BJ (cell line): ENCODE measurements at regions of chr13 and their contacts with region 1.

Region 1: GRCh38 chr13:114109641-114110041 is 22.8 kb downstream of the RASA3 start:
- DNase-seq: no peak
- H3K4me3 ChIP-seq: no peak overlapping the region
- H3K27me3 ChIP-seq: no peaks in the 10 kb centered on the region
- CTCF ChIP-seq: no peak

Region 2: GRCh38 chr13:114025714-114026431 is 83.8 kb before region 1 on chr13:
- CTCF ChIA-PET with region 1: no interaction called
- POLR2A ChIA-PET with region 1: no interaction called
- DNase-seq: no peak
- H3K4me3 ChIP-seq: no peak overlapping the region
- H3K27me3 ChIP-seq: no peaks in the 10 kb centered on the region
- CTCF ChIP-seq: peak; percentile 28; the same call in 1 of the 2 replicates

Region 3: DNA sequence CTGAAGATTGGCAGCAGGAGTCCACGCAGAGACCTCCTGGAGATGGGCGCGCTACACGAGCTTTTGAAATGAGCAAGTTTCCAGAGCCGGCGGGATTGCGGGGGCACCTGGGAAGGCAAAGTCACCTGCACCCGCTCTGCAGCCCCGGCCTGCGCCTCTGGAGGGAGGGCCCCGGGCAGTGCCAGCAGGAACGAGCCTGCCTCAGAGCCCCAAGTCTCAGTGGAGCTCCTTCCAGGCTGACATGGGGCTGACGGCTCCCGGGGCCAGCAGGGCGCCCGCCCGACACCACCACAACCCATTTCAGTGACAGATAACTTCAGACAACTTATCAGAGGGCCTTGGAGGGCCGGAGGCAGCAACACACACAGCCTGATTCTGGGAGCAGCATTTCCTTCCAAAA is 22.2 kb before region 1 on chr13:
- CTCF ChIA-PET with region 1: no interaction called
- POLR2A ChIA-PET with region 1: no interaction called
- DNase-seq: no peak
- H3K4me3 ChIP-seq: no peak overlapping the region
- H3K27me3 ChIP-seq: no peaks in the 10 kb centered on the region
- CTCF ChIP-seq: no peak

Region 4: DNA sequence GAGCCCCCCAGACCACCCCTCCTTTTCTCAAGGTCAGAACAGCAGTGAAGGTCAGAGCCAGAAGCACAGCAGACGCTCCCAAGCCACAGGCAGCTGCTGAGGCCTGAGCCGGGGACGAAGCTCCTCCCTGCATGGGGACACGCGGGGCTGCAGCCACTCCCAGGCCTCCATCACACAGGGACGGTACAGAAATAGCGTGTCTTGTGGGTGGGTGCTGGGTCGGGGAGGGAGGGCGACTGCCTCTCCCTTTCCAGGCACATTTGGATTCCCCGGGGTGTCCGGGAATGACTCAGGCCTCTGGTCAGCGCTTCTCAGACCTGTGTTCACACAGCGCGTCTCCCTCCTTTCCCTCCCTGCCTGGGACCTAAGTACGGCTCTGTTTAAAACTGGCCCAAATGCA is 10.4 kb before region 1 on chr13:
- CTCF ChIA-PET with region 1: no interaction called
- POLR2A ChIA-PET with region 1: interaction called, 19 read pairs
- DNase-seq: peak; percentile 88
- H3K4me3 ChIP-seq: no peak overlapping the region
- H3K27me3 ChIP-seq: no peaks in the 10 kb centered on the region
- CTCF ChIP-seq: no peak